ENCODE measurements at regions of chr12 and their contacts with region 1.

Region 1: GRCh38 chr12:92953747-92954146 is 24.7 kb upstream of the EEA1 start:
- DNase-seq: no peak
- H3K4me3 ChIP-seq: no peak overlapping the region
- H3K27ac ChIP-seq: no peak overlapping the region
- H3K4me1 ChIP-seq: no peaks in the 10 kb centered on the region
- H3K27me3 ChIP-seq: no peaks in the 10 kb centered on the region
- CTCF ChIP-seq: no peak
- POLR2A ChIP-seq: no peak

Region 2: GRCh38 chr12:91818227-91819131 is 1135.3 kb before region 1 on chr12:
- intact Hi-C with region 1: no loop called
- DNase-seq: no peak
- H3K4me3 ChIP-seq: no peak overlapping the region
- H3K27ac ChIP-seq: peak overlapping the region in 1 of 2 donors; percentile 9
- H3K4me1 ChIP-seq: no peaks in the 10 kb centered on the region
- H3K27me3 ChIP-seq: no peaks in the 10 kb centered on the region
- CTCF ChIP-seq: no peak
- POLR2A ChIP-seq: no peak

Region 3: DNA sequence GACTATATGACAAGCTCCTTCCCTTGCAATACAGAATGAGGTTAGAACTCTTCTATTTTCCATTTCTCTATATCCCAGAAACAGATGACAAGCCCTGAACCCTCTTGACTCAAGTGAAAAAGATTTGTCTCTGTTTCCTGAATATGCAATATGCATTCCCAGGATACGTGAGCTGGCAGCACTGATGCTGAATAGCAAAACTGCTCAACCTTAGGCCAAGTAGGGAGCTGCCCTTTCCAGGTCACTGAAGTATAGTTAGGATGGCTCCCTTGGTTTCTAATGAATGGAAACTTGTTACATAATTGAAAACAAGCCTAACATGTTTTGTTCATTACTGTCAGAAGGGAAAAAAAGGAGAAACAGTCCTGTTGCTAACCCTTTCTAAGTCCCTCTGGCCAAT is 298.8 kb before region 1 on chr12:
- intact Hi-C with region 1: loop called (anchors 5 kb)
- DNase-seq: no peak
- H3K4me3 ChIP-seq: no peak overlapping the region
- H3K27ac ChIP-seq: peak overlapping the region in 1 of 2 donors; percentile 59
- H3K4me1 ChIP-seq: no peaks in the 10 kb centered on the region
- H3K27me3 ChIP-seq: no peaks in the 10 kb centered on the region
- CTCF ChIP-seq: no peak
- POLR2A ChIP-seq: no peak

Region 4: DNA sequence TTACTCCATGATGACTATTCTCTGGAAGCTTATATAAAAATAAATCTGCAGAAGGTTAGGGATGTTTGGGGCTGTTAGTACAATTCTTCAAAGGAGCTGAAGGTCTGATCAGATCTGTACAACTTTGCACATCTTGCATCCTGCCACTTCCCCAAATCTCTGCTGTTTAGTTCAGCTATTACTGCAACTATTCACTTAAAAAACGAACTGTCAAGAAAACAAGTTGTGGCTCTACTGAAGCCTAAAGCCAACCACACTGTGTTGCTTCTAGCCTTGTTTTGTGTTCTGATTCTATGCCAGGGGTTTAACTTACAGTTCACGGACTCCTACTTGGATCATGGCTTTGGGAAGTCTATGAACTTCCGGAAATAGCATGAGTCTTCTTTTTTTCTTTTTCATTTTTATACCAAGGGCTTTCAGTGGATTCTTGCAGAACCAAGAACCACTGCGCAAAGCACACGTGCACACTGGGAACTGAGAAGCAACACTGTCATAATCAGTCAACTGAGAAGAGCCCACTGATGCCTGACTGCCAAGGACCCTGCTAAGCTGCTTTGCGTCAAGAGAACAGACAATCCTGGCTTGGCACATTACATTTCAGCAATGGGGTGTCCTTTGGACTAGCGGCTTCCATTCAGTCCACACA is 41.6 kb after region 1 on chr12:
- intact Hi-C with region 1: no loop called
- DNase-seq: no peak
- H3K4me3 ChIP-seq: no peak overlapping the region
- H3K27ac ChIP-seq: no peak overlapping the region
- H3K4me1 ChIP-seq: no peaks in the 10 kb centered on the region
- H3K27me3 ChIP-seq: no peaks in the 10 kb centered on the region
- CTCF ChIP-seq: no peak
- POLR2A ChIP-seq: no peak

Region 5: GRCh38 chr12:93019975-93020630 is 66.4 kb after region 1 on chr12:
- intact Hi-C with region 1: no loop called
- DNase-seq: peak in 1 of 2 donors; percentile 22
- H3K4me3 ChIP-seq: no peak overlapping the region
- H3K27ac ChIP-seq: peak overlapping the region; percentile 20 to 40
- H3K4me1 ChIP-seq: no peaks in the 10 kb centered on the region
- H3K27me3 ChIP-seq: no peaks in the 10 kb centered on the region
- CTCF ChIP-seq: no peak
- POLR2A ChIP-seq: no peak

Measured in breast epithelium (tissue), 4 donors.